HEK293 (cell line): ENCODE measurements at regions of chr11 and their contacts with region 1.

Region 1: DNA sequence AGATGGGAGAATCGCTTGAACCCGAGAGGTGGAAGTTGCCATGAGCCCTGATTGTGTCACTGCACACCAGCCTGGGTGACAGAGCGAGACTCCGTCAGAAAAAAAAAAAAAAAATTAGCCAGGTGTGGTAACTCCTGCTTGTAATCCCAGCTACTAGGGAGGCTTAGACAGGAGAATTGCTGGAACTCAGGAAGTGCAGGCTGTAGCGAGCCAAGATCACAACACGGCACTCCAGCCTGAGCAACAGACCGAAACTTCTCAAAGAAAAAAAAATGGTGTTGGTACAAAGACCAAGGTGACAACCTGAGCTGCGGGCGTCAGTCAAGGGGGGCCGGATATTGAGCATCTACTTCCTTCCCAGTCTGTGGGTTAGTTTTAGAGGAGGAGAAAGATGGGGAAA is 48.4 kb upstream of the HSPA8 start:
- H3K4me3 ChIP-seq: no peak overlapping the region
- H3K27ac ChIP-seq: no peak overlapping the region
- H3K4me1 ChIP-seq: no peaks in the 10 kb centered on the region
- CTCF ChIP-seq: no peak

Region 2: GRCh38 chr11:123083623-123084029 is 26.7 kb before region 1 on chr11:
- CTCF ChIA-PET with region 1: no interaction called
- POLR2A ChIA-PET with region 1: no interaction called
- H3K4me3 ChIP-seq: no peak overlapping the region
- H3K27ac ChIP-seq: no peak overlapping the region
- H3K4me1 ChIP-seq: no peaks in the 10 kb centered on the region
- CTCF ChIP-seq: no peak

Region 3: DNA sequence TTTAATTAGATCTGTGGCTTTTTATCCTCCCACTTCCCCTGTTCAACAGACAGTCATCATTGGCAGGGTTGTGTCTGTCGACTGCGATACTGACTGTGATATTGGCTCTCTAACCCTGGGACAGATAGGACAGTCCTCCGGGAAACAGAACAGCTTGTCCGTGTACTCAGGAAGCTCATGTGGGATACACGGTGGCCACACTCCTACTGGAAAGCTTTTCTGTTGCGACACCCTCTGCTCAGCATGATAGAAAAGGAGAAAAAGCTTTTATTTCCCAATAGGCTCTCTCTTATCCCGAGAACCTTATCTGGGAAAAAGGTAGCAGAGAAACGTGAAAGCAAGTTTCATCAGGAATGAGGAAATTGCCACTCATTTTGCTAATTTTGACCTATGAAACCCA is 12.0 kb after region 1 on chr11:
- CTCF ChIA-PET with region 1: interaction called, 16 read pairs
- POLR2A ChIA-PET with region 1: no interaction called
- H3K4me3 ChIP-seq: no peak overlapping the region
- H3K27ac ChIP-seq: no peak overlapping the region
- H3K4me1 ChIP-seq: no peaks in the 10 kb centered on the region
- CTCF ChIP-seq: no peak

Region 4: GRCh38 chr11:123152956-123153355 is 42.6 kb after region 1 on chr11:
- CTCF ChIA-PET with region 1: no interaction called
- POLR2A ChIA-PET with region 1: no interaction called
- H3K4me3 ChIP-seq: no peak overlapping the region
- H3K27ac ChIP-seq: no peak overlapping the region
- H3K4me1 ChIP-seq: no peaks in the 10 kb centered on the region
- CTCF ChIP-seq: no peak

Region 5: GRCh38 chr11:123235117-123235655 is 124.8 kb after region 1 on chr11:
- CTCF ChIA-PET with region 1: interaction called, 16 read pairs
- POLR2A ChIA-PET with region 1: no interaction called
- H3K4me3 ChIP-seq: no peak overlapping the region
- H3K27ac ChIP-seq: no peak overlapping the region
- H3K4me1 ChIP-seq: no peaks in the 10 kb centered on the region
- CTCF ChIP-seq: no peak

Region 6: GRCh38 chr11:123246749-123247495 is 136.6 kb after region 1 on chr11:
- CTCF ChIA-PET with region 1: interaction called, 261 read pairs
- POLR2A ChIA-PET with region 1: interaction called, 3 read pairs
- H3K4me3 ChIP-seq: no peak overlapping the region
- H3K27ac ChIP-seq: no peak overlapping the region
- H3K4me1 ChIP-seq: no peaks in the 10 kb centered on the region
- CTCF ChIP-seq: peak; percentile 52

Region 7: DNA sequence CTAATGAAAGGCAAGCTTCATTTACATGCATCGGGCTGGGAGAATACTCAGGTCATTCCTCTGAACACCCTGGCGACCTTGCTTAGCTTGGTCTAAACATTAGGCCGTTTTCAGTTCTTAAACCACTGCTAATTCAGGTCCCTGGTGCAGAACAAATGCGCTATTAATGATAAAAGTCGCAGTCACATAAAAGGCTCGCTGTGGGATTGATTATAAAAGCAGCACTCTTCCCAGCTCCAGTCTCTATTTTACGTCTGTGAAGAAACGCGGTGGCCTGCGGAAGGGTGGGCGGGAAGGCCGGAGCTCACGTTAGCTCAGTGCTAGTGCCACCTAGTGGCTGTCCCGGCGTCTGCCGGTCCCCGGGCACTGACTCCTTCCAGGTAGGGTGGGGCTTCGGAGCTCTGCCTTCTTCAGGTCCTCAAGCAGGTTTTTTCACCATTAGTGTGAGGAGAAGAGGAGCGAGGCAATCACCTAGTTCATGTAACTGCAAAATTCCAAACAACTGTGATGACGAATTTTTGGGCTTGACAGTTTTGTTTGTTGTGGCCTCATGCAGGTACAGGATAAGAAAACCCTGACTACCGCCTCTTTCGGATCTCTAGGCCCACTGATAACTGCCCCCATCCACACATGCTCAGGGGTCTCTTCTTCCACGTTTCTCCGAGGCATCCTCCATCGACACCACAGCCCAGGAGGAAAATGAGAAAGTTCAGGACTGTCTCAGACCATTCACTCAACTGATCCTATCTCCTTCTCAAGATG is 151.2 kb after region 1 on chr11:
- CTCF ChIA-PET with region 1: interaction called, 58 read pairs
- POLR2A ChIA-PET with region 1: no interaction called
- H3K4me3 ChIP-seq: no peak overlapping the region
- H3K27ac ChIP-seq: no peak overlapping the region
- H3K4me1 ChIP-seq: peaks cover 6% of the 10 kb centered on the region
- CTCF ChIP-seq: peak; percentile 53; the same call in 1 of the 2 replicates

Region 8: DNA sequence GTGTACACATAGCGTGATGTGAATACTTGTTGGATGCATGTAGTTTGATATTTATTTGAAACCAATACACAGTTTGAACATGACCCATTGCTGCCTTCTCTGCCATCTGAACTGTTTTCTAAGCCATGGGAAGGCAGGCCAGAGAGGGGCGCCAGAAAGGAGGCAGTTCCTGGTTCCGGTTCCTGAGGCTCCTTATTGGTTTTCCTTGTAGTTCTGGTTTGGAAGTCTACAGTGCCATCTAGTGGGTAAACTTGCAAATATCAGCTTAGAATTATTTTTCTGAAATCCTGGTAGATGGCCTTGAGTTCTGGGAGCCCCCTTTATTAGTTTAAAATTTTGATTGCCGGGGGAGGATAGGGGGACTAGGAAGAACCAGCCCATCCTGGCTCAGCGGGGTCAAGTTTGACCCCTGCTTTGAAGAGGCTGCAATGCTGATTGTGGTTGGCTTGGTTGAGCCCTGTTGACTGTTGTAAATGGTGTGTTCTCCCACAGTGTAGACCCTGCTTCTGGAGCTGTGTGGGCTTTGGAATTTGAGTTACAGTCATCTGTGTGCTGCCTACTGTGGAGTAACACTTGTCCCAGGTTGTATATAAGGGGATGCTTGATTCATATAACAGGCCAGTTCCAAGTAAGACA is 368.1 kb after region 1 on chr11:
- CTCF ChIA-PET with region 1: interaction called, 10 read pairs
- POLR2A ChIA-PET with region 1: no interaction called
- H3K4me3 ChIP-seq: no peak overlapping the region
- H3K27ac ChIP-seq: no peak overlapping the region
- H3K4me1 ChIP-seq: no peaks in the 10 kb centered on the region
- CTCF ChIP-seq: peak; percentile 30; the same call in 1 of the 2 replicates